Activated naive CD4-positive, alpha-beta T cell treated with anti-CD3 and anti-CD28 coated beads for 36 hours (primary cell): ENCODE measurements at regions of chr2 and their contacts with region 1.

Region 1: GRCh38 chr2:191059308-191059707 is 45.3 kb upstream of the STAT1 start:
- DNase-seq: peak; percentile 27
- H3K4me3 Mint-ChIP-seq: no peak overlapping the region
- H3K27ac Mint-ChIP-seq: no peak overlapping the region
- H3K4me1 Mint-ChIP-seq: peaks cover 63% of the 10 kb centered on the region
- H3K27me3 Mint-ChIP-seq: no peaks in the 10 kb centered on the region

Region 2: DNA sequence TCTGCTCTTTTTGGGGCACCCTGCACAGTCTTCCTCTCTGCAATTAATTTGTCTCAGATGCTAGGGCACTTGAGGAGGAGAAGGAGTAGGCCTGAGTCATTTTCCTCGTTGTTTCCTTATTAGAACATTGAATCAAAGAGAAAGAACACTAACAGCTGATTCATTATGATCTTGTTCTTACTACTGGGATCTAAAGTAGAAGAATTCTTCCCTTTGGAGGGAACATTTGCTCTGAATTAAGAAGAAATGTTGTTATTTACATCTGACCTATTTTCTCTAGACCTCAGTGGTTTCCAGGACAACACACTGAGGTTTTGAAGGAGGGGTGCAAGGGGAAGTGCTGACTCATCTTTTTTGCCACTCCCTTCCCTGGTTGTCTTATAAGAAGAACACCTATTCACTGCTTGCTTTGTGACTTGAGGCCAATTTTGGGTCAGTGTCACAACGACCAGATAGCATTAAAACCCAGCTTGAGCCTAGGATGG is 21.0 kb before region 1 on chr2:
- CTCF ChIA-PET with region 1: no interaction called
- intact Hi-C with region 1: loop called (anchors 1 kb)
- DNase-seq: no peak
- H3K4me3 Mint-ChIP-seq: no peak overlapping the region
- H3K27ac Mint-ChIP-seq: peak overlapping the region; percentile 68
- H3K4me1 Mint-ChIP-seq: peaks cover 35% of the 10 kb centered on the region
- H3K27me3 Mint-ChIP-seq: no peaks in the 10 kb centered on the region

Region 3: DNA sequence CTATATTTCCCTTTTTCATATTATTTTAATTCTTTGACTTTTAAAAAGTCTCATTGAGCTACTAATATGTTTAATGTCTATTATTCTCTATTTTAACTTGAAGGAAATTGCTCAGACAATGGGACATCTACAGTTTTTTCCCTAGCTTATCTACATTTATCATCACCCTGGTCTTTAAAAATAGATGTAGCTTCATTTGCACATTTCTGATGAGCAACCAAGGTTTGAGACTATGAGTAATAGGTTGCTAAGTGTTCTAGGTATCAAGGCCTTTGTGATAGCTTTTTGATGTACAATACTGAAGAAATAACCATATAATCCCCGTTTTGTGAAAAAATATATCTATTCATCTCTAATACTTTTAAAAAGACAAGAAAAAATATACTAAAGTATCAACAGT is 44.5 kb after region 1 on chr2:
- CTCF ChIA-PET with region 1: interaction called, 6 read pairs
- intact Hi-C with region 1: loop called (anchors 1 kb)
- DNase-seq: no peak
- H3K4me3 Mint-ChIP-seq: no peak overlapping the region
- H3K27ac Mint-ChIP-seq: peak overlapping the region; percentile 61
- H3K4me1 Mint-ChIP-seq: peaks cover 69% of the 10 kb centered on the region
- H3K27me3 Mint-ChIP-seq: no peaks in the 10 kb centered on the region

Region 4: DNA sequence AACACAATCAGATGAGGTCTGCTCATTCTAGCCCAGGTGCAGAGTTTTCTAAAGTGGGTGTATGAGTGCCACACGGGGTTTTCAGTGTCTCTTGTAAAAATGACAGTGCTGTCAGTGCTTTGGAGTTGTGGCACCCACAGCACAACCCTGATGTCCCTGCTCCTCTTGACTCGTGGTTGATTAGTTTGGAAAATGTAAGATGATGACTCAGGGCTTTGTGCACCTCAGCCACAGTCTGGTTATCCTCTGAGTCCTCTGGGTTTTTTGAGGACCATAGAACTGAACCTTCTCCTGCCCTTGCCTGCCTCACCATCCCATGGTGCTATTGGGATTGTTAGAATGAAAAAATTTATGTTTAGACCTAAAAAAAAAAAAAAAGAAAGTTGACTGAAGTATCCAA is 291.5 kb after region 1 on chr2:
- CTCF ChIA-PET with region 1: no interaction called
- intact Hi-C with region 1: no loop called
- DNase-seq: no peak
- H3K4me3 Mint-ChIP-seq: no peak overlapping the region
- H3K27ac Mint-ChIP-seq: no peak overlapping the region
- H3K4me1 Mint-ChIP-seq: no peaks in the 10 kb centered on the region
- H3K27me3 Mint-ChIP-seq: no peaks in the 10 kb centered on the region